ENCODE measurements at regions of chr7 and their contacts with region 1.

Region 1: GRCh38 chr7:90424720-90425119 is 21.5 kb downstream of the CLDN12 start:
- DNase-seq: no peak
- H3K4me3 ChIP-seq: no peak overlapping the region
- H3K27ac ChIP-seq: no peak overlapping the region
- H3K4me1 ChIP-seq: no peaks in the 10 kb centered on the region
- H3K27me3 ChIP-seq: no peaks in the 10 kb centered on the region
- CTCF ChIP-seq: no peak
- EP300 ChIP-seq: no peak
- POLR2A ChIP-seq: no peak

Region 2: DNA sequence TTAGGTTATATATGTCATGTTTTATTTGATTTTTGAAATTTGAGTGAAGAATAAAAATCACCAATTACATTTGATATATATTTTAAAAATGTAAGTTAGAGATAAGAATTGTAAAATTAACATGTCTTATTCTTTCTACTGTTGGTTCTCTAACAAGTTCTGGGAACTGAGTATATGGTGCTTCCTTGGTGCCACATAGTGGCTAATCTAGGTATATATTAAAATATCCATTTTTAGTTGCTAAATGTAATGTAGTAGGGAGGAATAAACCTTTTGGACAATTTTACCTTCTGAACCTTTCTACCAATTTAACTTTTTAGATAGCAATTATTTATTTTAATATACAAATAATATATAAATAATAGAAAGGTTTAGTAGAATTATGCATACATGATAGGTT is 162.3 kb before region 1 on chr7:
- intact Hi-C with region 1: loop called in 1 of 4 experiments (anchors 10 kb)
- DNase-seq: no peak
- H3K4me3 ChIP-seq: no peak overlapping the region
- H3K27ac ChIP-seq: no peak overlapping the region
- H3K4me1 ChIP-seq: no peaks in the 10 kb centered on the region
- H3K27me3 ChIP-seq: no peaks in the 10 kb centered on the region
- CTCF ChIP-seq: peak; percentile 50 to 55 (median 51)
- EP300 ChIP-seq: no peak
- POLR2A ChIP-seq: no peak

Region 3: GRCh38 chr7:90461219-90461618 is 36.5 kb after region 1 on chr7:
- intact Hi-C with region 1: no loop called
- DNase-seq: no peak
- H3K4me3 ChIP-seq: no peak overlapping the region
- H3K27ac ChIP-seq: no peak overlapping the region
- H3K4me1 ChIP-seq: no peaks in the 10 kb centered on the region
- H3K27me3 ChIP-seq: no peaks in the 10 kb centered on the region
- CTCF ChIP-seq: no peak
- EP300 ChIP-seq: no peak
- POLR2A ChIP-seq: no peak

Region 4: GRCh38 chr7:90900628-90901356 is 476.1 kb after region 1 on chr7:
- intact Hi-C with region 1: no loop called
- DNase-seq: no peak
- H3K4me3 ChIP-seq: no peak overlapping the region
- H3K27ac ChIP-seq: no peak overlapping the region
- H3K4me1 ChIP-seq: no peaks in the 10 kb centered on the region
- H3K27me3 ChIP-seq: no peaks in the 10 kb centered on the region
- CTCF ChIP-seq: no peak
- EP300 ChIP-seq: no peak
- POLR2A ChIP-seq: no peak

Measured in ovary (tissue), 10 donors.